ENCODE measurements at regions of chr3 and their contacts with region 1.

Region 1: GRCh38 chr3:56988458-56989168 is 71.9 kb upstream of the SPATA12 start:
- DNase-seq: peak; percentile 82 to 95
- H3K4me3 ChIP-seq: no peak overlapping the region
- H3K27ac ChIP-seq: peak overlapping the region in 2 of 5 donors; percentile 57
- H3K4me1 ChIP-seq: peaks cover 15 to 71% (median 58%) of the 10 kb centered on the region in 4 donors
- H3K27me3 ChIP-seq: no peaks in the 10 kb centered on the region
- CTCF ChIP-seq: peak in 5 of 7 experiments; percentile 38 to 81 (median 76)
- EP300 ChIP-seq: no peak
- POLR2A ChIP-seq: no peak

Region 2: DNA sequence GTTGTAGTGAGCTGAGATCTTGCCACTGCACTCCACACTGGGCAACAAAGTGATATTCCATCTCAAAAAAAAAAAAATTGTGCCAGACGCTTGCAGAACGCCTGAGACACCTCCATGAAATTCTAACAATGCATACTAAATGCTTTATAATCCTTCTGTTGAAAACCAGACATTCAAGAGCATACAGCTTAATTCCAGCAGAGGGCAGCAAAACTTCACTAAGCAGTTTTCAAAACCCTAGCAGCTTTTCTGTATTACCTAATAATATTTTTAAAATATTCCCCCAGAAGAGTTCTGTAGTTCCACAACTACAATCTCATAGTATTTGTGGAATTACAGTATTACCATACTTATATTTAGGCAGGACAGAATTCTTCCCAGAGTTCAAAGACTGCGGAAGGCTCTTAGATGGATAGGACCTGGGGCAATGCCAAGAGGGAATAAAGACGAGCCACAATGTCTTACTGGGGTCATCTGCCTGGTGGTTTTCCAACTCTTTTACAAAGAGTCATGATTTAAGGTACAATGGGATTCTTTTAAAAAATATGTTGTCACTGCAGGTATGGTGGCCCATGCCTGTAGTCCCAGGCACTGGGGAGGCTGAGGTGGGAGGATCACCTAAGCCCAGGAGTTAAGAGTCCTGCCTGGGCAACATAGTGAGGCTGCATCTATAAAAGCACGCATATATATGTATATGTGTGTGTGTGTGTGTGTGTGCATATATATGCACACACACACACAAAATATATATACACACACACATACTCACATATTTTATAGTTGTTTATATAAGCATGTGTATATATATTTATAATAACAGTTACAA is 285.9 kb before region 1 on chr3:
- intact Hi-C with region 1: loop called (anchors 5 kb)
- DNase-seq: peak; percentile 45 to 91
- H3K4me3 ChIP-seq: no peak overlapping the region
- H3K27ac ChIP-seq: no peak overlapping the region
- H3K4me1 ChIP-seq: peaks cover 0 to 8% (median 2%) of the 10 kb centered on the region in 4 donors
- H3K27me3 ChIP-seq: no peaks in the 10 kb centered on the region
- CTCF ChIP-seq: peak in 5 of 7 experiments; percentile 64 to 86 (median 82)
- EP300 ChIP-seq: no peak
- POLR2A ChIP-seq: no peak

Region 3: GRCh38 chr3:56758539-56758981 is 230.1 kb before region 1 on chr3:
- intact Hi-C with region 1: no loop called
- DNase-seq: peak; percentile 68 to 86
- H3K4me3 ChIP-seq: no peak overlapping the region
- H3K27ac ChIP-seq: peak overlapping the region; percentile 74 to 93 (median 77)
- H3K4me1 ChIP-seq: peaks cover 13 to 60% (median 31%) of the 10 kb centered on the region in 4 donors
- H3K27me3 ChIP-seq: no peaks in the 10 kb centered on the region
- CTCF ChIP-seq: no peak
- EP300 ChIP-seq: no peak
- POLR2A ChIP-seq: no peak

Region 4: GRCh38 chr3:56801662-56802377 is 186.8 kb before region 1 on chr3 and contains the start of gene ARHGEF3:
- intact Hi-C with region 1: loop called (anchors 5 kb)
- DNase-seq: peak; percentile 88 to 95
- H3K4me3 ChIP-seq: peak within 1 kb of the TSS; percentile 61 to 84 (median 80)
- H3K27ac ChIP-seq: peak within 1 kb of the TSS; percentile 78 to 84 (median 82)
- H3K4me1 ChIP-seq: peaks cover 44 to 64% (median 50%) of the 10 kb centered on the region in 4 donors
- H3K27me3 ChIP-seq: no peaks in the 10 kb centered on the region
- CTCF ChIP-seq: peak in 4 of 7 experiments; percentile 28 to 59 (median 40)
- EP300 ChIP-seq: no peak
- POLR2A ChIP-seq: peak in 1 of 4 donors; percentile 69
- total RNA-seq, gene ARHGEF3: 6.2 to 23.8 (median 17.5) TPM

Region 5: DNA sequence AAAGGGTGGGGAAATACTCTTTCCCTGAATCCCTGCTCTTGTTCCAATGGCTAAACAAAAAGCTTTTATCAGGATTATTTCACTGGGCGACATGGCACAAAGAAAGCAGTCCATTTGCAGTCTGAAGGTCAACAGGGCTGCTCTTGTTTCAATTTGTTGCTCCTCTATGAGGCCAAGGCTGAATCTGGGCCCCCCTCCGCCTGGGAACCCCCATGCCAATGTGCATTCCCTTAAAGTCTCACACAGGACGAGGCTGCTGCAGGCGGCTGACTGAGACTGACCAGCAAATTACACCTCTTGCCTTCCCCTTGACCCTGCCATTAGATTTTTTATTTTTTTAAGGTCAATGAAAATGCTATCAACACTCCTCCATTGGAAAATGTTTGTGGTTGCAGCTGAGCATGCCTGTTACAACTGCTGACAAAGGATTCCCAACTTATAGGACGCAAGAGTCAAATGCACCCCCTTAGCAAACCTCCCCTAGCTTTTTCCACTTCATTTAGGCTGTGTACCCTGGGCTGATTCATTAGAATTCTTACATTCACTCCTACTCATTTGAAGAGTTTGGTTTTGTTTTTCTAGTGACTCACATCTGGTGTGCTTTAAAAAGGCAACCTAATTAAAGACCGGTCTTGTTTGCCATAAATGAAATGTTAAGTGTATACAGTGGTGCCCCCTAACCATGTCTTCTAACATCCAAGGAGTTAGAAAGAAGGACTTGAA is 126.1 kb before region 1 on chr3:
- intact Hi-C with region 1: no loop called
- DNase-seq: no peak
- H3K4me3 ChIP-seq: no peak overlapping the region
- H3K27ac ChIP-seq: peak overlapping the region in 4 of 5 donors; percentile 4 to 40 (median 37)
- H3K4me1 ChIP-seq: peaks cover 4 to 23% (median 14%) of the 10 kb centered on the region in 4 donors
- H3K27me3 ChIP-seq: no peaks in the 10 kb centered on the region
- CTCF ChIP-seq: no peak
- EP300 ChIP-seq: no peak
- POLR2A ChIP-seq: no peak

Region 6: GRCh38 chr3:56923521-56924224 is 64.9 kb before region 1 on chr3:
- intact Hi-C with region 1: loop called (anchors 10 kb)
- DNase-seq: peak; percentile 45 to 89
- H3K4me3 ChIP-seq: no peak overlapping the region
- H3K27ac ChIP-seq: peak overlapping the region in 4 of 5 donors; percentile 0 to 73 (median 66)
- H3K4me1 ChIP-seq: peaks cover 26 to 75% (median 48%) of the 10 kb centered on the region in 4 donors
- H3K27me3 ChIP-seq: no peaks in the 10 kb centered on the region
- CTCF ChIP-seq: no peak
- EP300 ChIP-seq: no peak
- POLR2A ChIP-seq: no peak